ENCODE measurements at regions of chr6 and their contacts with region 1.

Region 1: DNA sequence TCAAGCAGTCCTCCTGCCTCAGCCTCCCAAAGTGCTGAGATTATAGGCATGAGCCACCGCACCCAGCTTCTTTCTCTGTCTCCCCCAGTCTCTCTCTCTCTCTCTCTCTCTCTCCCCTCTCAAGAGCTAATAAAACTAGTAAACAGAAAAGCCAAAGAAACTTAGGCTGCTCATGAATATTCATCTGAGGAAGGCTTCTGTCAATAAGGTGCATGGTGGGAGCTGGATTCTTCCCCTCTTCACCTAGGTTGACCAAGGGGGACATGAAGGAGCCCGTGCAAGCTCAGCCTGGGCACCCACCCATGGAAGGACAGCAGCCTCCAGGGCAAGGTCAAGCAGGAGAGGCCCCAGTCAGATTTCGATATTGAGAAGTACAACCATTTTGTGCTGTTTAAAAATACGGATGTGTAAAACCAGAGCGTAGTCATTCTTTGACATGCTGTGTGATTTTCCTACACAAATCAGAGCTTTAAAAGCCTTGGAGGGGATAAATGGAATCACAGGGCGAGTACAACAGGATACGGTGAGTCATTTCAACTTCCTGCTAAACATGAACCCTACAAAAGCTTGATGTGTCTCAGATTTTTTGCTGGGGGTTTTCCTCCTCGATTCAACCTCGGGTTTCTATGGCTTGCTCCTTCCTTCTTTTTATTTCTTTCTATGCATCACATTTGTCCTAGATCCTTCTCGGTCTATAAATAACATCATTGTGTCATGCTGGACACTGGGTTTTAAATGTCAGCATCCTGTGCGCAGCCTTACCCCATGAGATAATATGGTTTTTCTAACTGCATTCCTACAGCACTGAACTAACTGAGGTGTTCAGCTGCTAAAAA is 368.9 kb upstream of the JARID2 start:
- DNase-seq: peak; percentile 81
- H3K4me3 Mint-ChIP-seq: peak overlapping the region; percentile 79
- H3K27ac Mint-ChIP-seq: peak overlapping the region; percentile 97
- H3K4me1 Mint-ChIP-seq: peaks cover 68% of the 10 kb centered on the region
- H3K27me3 Mint-ChIP-seq: no peaks in the 10 kb centered on the region

Region 2: GRCh38 chr6:14423955-14424354 is 453.0 kb before region 1 on chr6:
- intact Hi-C with region 1: loop called (anchors 2 kb)
- DNase-seq: no peak
- H3K4me3 Mint-ChIP-seq: peak overlapping the region; percentile 23
- H3K27ac Mint-ChIP-seq: peak overlapping the region; percentile 88
- H3K4me1 Mint-ChIP-seq: peaks cover 25% of the 10 kb centered on the region
- H3K27me3 Mint-ChIP-seq: no peaks in the 10 kb centered on the region

Region 3: GRCh38 chr6:14734416-14735340 is 142.3 kb before region 1 on chr6:
- intact Hi-C with region 1: loop called (anchors 1 kb)
- DNase-seq: peak; percentile 88
- H3K4me3 Mint-ChIP-seq: peak overlapping the region; percentile 54
- H3K27ac Mint-ChIP-seq: peak overlapping the region; percentile 95
- H3K4me1 Mint-ChIP-seq: peaks cover 91% of the 10 kb centered on the region
- H3K27me3 Mint-ChIP-seq: no peaks in the 10 kb centered on the region

Region 4: DNA sequence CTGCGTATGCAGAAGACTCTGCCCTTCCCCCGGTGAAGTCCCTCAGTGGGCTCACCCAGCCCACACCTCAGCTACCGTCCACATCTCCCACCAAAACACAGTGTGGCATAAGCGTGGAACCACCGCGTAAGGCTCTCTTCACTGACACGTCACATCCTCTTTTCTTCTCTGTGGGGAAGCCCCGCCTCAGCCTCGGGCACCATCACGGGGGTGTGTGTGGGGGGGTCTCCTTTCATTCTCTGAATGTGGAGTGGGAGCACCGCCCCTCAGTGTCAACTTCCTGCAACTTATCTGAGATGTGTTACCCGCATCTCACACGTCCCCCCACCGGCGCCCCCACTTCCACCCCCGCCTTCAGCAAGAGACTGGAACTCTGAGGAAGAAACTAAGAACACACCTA is 19.5 kb before region 1 on chr6:
- intact Hi-C with region 1: loop called (anchors 1 kb)
- DNase-seq: peak; percentile 82
- H3K4me3 Mint-ChIP-seq: peak overlapping the region; percentile 71
- H3K27ac Mint-ChIP-seq: peak overlapping the region; percentile 98
- H3K4me1 Mint-ChIP-seq: peaks cover 35% of the 10 kb centered on the region
- H3K27me3 Mint-ChIP-seq: no peaks in the 10 kb centered on the region

Region 5: GRCh38 chr6:15245361-15246216 is 368.6 kb after region 1 on chr6 and contains the start of gene JARID2:
- intact Hi-C with region 1: loop called (anchors 1 kb)
- DNase-seq: peak; percentile 98
- H3K4me3 Mint-ChIP-seq: peak within 1 kb of the TSS; percentile 99
- H3K27ac Mint-ChIP-seq: peak within 1 kb of the TSS; percentile 95
- H3K4me1 Mint-ChIP-seq: peaks cover 28% of the 10 kb centered on the region
- H3K27me3 Mint-ChIP-seq: peaks cover 2% of the 10 kb centered on the region
- total RNA-seq, gene JARID2: 48.7 and 49.5 TPM in 2 replicates

Region 6: GRCh38 chr6:15491255-15491985 is 614.4 kb after region 1 on chr6:
- intact Hi-C with region 1: loop called (anchors 5 kb)
- DNase-seq: peak; percentile 91
- H3K4me3 Mint-ChIP-seq: no peak overlapping the region
- H3K27ac Mint-ChIP-seq: peak overlapping the region; percentile 74
- H3K4me1 Mint-ChIP-seq: peaks cover 38% of the 10 kb centered on the region
- H3K27me3 Mint-ChIP-seq: no peaks in the 10 kb centered on the region

Measured in activated CD4-positive, alpha-beta T cell treated with anti-CD3 and anti-CD28 coated beads, Interleukin-2, amount 10 ng/mL, durations not matched to agents 24 days and 14 days (primary cell).